Dendritic cell treated with granulocyte-macrophage colony-stimulating factor and Interleukin-4, amounts not matched to agents 40 ng/mL and 50 ng/mL, for 4 days (primary cell): ENCODE measurements at regions of chr12 and their contacts with region 1.

Region 1: DNA sequence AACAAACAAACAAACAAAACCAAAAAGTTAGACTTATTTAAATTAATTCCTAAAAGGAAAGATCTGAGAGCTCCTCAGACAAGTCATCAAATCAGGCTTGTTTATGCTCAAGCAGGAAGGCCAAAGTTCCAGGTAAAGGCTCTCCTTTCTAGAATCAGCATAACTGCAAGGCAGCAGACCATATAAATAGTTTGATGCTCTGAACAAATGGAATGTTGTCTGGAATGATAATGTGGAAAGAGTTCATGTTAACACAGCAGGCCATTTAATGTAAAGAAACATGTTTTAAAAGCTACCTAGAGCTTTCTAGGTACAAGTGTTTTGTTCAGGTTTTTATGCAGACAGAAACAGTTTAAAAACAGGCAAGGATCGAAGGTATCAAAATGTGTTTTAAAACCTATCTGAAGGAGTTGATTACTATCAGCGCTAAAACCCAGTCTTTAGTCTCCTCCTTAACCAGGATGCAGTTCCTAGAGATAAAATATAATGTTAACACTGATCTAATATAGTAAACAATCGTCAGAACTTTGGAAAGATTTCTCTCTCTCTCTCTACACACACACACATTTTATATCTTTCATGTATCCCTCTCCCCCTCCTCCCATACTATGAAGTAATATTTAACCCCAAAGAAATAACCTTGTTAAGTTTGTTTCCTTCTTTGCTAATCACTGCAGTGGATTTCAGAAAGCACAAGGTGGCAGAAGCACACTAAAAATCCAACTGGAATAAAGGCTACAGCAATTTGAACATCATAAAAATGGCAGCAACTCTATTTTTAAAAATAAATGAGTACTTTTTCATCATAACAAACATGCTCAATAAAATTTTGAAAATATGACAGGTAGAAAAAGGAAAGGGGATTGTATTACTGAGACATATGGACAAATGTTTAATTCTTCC is 135.5 kb downstream of the PAWR start:
- H3K4me3 Mint-ChIP-seq: no peak overlapping the region
- H3K27ac Mint-ChIP-seq: no peak overlapping the region
- H3K4me1 Mint-ChIP-seq: peaks cover 4% of the 10 kb centered on the region
- H3K27me3 Mint-ChIP-seq: no peaks in the 10 kb centered on the region

Region 2: DNA sequence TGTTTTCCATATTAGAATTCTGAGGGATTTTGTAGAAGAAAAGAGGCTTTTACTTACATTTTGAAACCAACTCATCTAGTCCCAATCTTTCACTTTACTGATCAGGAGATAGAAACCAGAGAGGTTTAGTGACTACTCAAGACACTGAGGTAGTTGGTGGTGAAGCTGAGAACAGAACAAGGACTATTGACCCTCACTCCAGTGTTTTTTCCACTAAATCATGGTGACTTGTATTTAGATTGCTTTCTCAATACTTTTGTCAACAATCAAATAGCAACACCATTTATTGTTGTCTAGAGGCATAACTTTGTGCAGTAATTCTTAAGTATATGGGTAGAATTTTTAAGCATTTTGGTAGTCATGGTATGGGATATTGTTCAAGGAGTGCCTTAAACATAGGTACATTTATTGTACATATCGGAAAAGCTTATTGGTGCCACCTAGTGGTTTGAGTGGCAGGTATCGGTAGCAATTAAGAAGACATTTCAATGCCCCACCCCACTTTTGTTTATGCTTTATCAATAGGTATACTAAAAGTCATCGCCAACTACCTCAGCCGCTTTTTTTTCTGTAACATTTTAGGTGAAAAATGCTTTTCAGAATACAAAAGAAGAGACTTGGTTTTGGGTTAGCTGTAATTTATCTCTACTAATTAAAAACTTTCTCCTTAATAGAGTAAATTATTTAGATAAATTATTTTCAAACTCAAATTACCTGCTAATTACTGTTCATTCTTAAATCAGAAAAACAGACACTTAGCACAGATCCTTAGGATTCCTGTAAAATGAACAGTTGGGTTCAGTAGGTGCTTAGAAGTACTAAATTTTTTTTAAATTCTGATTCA is 182.8 kb after region 1 on chr12:
- intact Hi-C with region 1: loop called (anchors 1 kb)
- H3K4me3 Mint-ChIP-seq: no peak overlapping the region
- H3K27ac Mint-ChIP-seq: no peak overlapping the region
- H3K4me1 Mint-ChIP-seq: no peaks in the 10 kb centered on the region
- H3K27me3 Mint-ChIP-seq: no peaks in the 10 kb centered on the region

Region 3: DNA sequence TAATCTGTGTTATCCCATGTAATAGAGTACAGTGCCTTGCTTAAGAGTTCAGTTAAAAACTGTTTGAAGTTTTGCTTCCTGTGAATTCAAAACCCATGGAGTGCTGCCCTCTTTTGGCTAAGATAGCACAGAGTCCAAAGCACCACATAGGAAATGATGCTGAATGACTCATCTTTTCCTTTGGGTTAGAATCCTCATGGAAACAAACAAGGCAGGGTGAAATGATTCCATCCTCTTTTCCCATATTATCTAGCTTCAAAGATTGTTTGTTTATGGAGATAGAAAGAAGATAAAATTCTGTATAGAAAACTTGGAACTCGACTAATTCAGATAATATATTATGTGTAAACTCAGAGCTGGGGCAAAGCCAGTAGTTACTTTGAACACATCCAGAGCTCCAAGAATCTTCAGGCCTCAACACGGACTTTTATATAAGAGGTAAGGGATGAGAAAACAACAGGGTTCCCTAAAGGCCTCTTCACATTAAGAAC is 631.5 kb after region 1 on chr12:
- intact Hi-C with region 1: loop called (anchors 2 kb)
- H3K4me3 Mint-ChIP-seq: no peak overlapping the region
- H3K27ac Mint-ChIP-seq: no peak overlapping the region
- H3K4me1 Mint-ChIP-seq: no peaks in the 10 kb centered on the region
- H3K27me3 Mint-ChIP-seq: no peaks in the 10 kb centered on the region

Region 4: DNA sequence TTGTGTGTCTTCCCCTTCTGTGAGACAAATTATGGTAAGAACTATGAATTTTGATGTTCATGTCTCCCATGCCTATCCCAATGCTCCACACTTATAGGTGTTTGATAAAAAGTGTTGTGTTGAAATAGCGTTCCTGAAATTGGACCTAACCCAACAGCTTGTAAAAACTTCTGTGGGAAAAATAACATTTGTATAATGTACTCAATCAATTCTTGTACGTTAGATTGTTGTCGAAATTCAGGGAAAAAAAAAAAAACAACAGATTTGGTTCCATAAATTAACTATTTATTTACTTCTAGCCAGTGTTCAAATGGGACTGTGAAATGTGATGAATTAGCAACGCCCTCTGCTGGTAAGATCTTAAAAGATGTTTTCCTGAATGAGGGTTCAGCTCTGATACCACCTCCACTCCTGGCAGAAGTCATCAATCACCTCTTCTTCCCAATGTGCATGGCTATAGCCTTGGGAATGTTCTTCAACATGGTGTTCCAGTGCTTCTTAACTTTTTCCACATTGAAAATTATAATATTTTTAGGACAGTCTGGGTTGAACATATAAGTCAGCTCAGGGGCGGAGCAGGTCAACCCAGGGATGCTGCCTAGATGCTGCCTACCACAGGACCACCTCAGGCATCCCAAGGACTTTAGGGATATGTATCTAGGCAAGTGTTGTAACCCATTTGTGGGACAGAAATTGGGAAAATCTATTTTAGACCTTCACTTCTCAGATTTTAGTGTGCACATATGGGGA is 714.7 kb after region 1 on chr12:
- intact Hi-C with region 1: loop called (anchors 5 kb)
- H3K4me3 Mint-ChIP-seq: no peak overlapping the region
- H3K27ac Mint-ChIP-seq: no peak overlapping the region
- H3K4me1 Mint-ChIP-seq: no peaks in the 10 kb centered on the region
- H3K27me3 Mint-ChIP-seq: no peaks in the 10 kb centered on the region